HEK293 (cell line): ENCODE measurements at regions of chr12 and their contacts with region 1.

Region 1: GRCh38 chr12:3299929-3300832 is 190.8 kb upstream of the PRMT8 start:
- H3K4me3 ChIP-seq: no peak overlapping the region
- H3K27ac ChIP-seq: peak overlapping the region; percentile 27; the same call in 1 of the 2 replicates
- H3K4me1 ChIP-seq: no peaks in the 10 kb centered on the region; the same call in 1 of the 2 replicates
- CTCF ChIP-seq: peak; percentile 90

Region 2: DNA sequence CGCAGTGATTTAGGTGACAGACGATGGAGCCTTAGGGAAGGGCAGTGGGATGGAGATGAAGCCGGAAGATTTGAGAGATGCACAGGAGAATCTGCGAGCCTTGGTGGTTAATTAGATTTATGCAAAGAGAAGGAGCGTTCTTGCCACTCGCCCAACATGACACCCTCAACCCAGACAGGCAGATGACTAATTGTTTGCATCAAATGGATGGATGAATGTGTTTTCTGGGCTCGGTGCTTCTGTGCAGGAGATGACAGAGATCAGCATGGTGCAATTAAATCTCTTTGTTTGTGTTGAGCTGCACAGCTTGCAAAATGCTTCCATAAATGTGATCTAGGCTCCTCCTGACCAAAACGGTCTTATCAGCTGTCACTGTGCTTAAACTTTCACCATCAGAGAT is 11.5 kb before region 1 on chr12:
- CTCF ChIA-PET with region 1: interaction called, 21 read pairs
- POLR2A ChIA-PET with region 1: no interaction called
- H3K4me3 ChIP-seq: no peak overlapping the region
- H3K27ac ChIP-seq: no peak overlapping the region
- H3K4me1 ChIP-seq: no peaks in the 10 kb centered on the region
- CTCF ChIP-seq: no peak

Region 3: GRCh38 chr12:3342056-3342455 is 41.9 kb after region 1 on chr12:
- CTCF ChIA-PET with region 1: interaction called, 16 read pairs
- POLR2A ChIA-PET with region 1: no interaction called
- H3K4me3 ChIP-seq: no peak overlapping the region
- H3K27ac ChIP-seq: no peak overlapping the region
- H3K4me1 ChIP-seq: no peaks in the 10 kb centered on the region
- CTCF ChIP-seq: peak; percentile 57

Region 4: DNA sequence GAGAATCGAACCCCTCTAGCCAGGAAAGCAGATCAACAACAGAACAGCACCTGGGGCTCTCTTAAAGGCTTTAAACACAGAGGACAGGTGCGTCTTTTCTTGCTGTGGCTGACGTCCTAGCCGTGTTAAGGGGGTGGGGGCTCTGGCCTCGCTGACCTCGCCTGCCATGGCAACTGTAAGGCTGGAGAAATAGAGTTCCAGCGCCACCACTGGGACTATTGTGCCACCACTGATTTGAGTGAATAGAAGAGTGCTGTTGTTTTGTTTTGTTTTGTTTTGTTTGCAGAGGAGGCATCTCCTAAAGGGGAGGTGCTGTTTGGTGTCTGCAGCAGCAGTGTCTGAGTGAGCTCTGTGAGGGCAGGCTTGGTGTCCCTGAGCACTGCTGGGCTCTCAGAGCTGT is 156.6 kb after region 1 on chr12:
- CTCF ChIA-PET with region 1: interaction called, 16 read pairs
- POLR2A ChIA-PET with region 1: no interaction called
- H3K4me3 ChIP-seq: no peak overlapping the region
- H3K27ac ChIP-seq: no peak overlapping the region
- H3K4me1 ChIP-seq: no peaks in the 10 kb centered on the region
- CTCF ChIP-seq: no peak

Region 5: GRCh38 chr12:3523058-3523457 is 222.9 kb after region 1 on chr12:
- CTCF ChIA-PET with region 1: interaction called, 12 read pairs
- POLR2A ChIA-PET with region 1: no interaction called
- H3K4me3 ChIP-seq: no peak overlapping the region
- H3K27ac ChIP-seq: no peak overlapping the region
- H3K4me1 ChIP-seq: peaks cover 14% of the 10 kb centered on the region
- CTCF ChIP-seq: no peak

Region 6: DNA sequence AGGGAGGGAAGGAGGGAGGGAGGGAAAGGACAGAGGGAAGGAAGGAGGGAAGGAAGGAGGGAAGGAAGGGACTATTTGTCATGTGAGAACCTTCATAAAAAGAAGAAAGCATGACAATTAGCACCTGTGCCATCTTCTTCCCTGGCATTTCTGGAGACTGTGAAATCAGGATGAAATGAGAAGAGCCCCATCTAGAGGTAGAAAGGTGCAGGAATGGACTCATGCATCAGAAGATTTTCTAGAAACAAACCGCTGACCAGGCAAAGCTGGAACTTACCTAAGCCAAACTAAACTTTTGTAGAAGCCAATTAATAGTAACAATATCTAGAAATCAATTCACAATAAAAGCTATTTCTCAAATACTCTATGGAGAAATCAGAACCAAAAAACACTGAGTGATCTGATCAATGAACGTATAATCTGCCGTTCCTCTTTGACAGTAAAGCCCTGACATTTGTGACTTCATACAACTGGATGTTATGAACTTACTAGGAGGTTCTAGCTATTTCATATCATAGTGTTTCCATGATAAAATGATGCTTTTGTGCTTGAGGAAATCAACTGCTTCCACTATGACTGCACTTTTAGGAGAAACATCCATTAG is 477.1 kb after region 1 on chr12:
- CTCF ChIA-PET with region 1: interaction called, 51 read pairs
- POLR2A ChIA-PET with region 1: no interaction called
- H3K4me3 ChIP-seq: no peak overlapping the region
- H3K27ac ChIP-seq: no peak overlapping the region
- H3K4me1 ChIP-seq: no peaks in the 10 kb centered on the region
- CTCF ChIP-seq: peak; percentile 34; the same call in 1 of the 2 replicates

Region 7: GRCh38 chr12:3803865-3804472 is 503.8 kb after region 1 on chr12:
- CTCF ChIA-PET with region 1: interaction called, 124 read pairs
- POLR2A ChIA-PET with region 1: interaction called, 4 read pairs
- H3K4me3 ChIP-seq: no peak overlapping the region
- H3K27ac ChIP-seq: no peak overlapping the region
- H3K4me1 ChIP-seq: no peaks in the 10 kb centered on the region
- CTCF ChIP-seq: peak; percentile 49